H1 (cell line): ENCODE measurements at regions of chr6 and their contacts with region 1.

Region 1: GRCh38 chr6:85537055-85537494 is 56.6 kb downstream of the SNX14 start:
- DNase-seq: no peak
- H3K4me3 ChIP-seq: no peak overlapping the region
- H3K27ac ChIP-seq: no peak overlapping the region
- H3K4me1 ChIP-seq: no peaks in the 10 kb centered on the region
- H3K27me3 ChIP-seq: no peaks in the 10 kb centered on the region
- CTCF ChIP-seq: no peak
- EP300 ChIP-seq: no peak
- POLR2A ChIP-seq: no peak
- RAD21 ChIP-seq: no peak

Region 2: DNA sequence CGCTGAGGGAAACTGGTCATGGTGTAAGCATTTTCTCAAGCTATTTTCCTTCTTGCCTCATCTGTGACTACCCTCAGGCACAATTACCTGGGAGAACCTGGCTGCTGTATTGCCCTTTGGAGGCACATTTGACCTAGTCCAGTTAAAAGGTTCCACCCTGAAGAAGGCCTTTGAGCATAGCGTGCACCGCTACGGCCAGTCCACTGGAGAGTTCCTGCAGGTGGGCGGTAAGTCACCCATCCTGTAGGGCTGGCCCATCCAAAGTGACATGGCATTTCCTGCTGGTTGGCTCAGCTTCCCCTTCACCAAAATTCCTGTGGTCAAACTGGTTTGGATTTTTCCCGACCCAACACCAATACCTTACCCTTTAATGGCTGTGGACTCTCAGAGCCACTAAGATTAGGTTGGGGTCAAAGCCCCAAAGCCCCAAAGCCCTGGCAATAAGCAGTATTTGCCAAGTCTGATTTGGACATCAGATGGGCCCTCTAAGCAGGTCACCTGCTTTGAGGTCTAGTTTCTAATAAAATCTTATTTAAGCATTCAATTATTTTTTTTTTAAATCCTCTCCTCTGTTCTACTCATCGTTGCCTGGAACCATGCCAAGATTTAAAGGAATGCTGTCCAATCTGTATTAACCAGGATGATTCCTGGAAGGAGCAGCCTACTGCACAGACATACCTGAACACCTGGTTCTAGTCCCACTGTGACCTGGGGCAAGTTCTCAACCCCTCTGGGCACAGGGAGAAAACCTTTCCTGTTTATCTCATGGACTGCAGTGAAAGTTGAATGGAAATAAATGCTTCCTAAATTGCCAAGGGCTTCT is 46.4 kb before region 1 on chr6:
- CTCF ChIA-PET with region 1: interaction called, 11 read pairs
- POLR2A ChIA-PET with region 1: no interaction called
- DNase-seq: peak in 1 of 2 experiments; percentile 16
- H3K4me3 ChIP-seq: no peak overlapping the region
- H3K27ac ChIP-seq: no peak overlapping the region
- H3K4me1 ChIP-seq: no peaks in the 10 kb centered on the region
- H3K27me3 ChIP-seq: no peaks in the 10 kb centered on the region
- CTCF ChIP-seq: no peak
- EP300 ChIP-seq: no peak
- POLR2A ChIP-seq: no peak
- RAD21 ChIP-seq: no peak

Region 3: GRCh38 chr6:85551264-85551663 is 14.2 kb after region 1 on chr6:
- CTCF ChIA-PET with region 1: interaction called, 16 read pairs
- POLR2A ChIA-PET with region 1: no interaction called
- DNase-seq: no peak
- H3K4me3 ChIP-seq: no peak overlapping the region
- H3K27ac ChIP-seq: no peak overlapping the region
- H3K4me1 ChIP-seq: no peaks in the 10 kb centered on the region; a peak in 1 of 7 replicates
- H3K27me3 ChIP-seq: no peaks in the 10 kb centered on the region
- CTCF ChIP-seq: no peak
- EP300 ChIP-seq: no peak
- POLR2A ChIP-seq: no peak
- RAD21 ChIP-seq: no peak